PC-3 (cell line): ENCODE measurements at regions of chr20 and their contacts with region 1.

Region 1: GRCh38 chr20:4949833-4950178 is 51.5 kb downstream of the SLC23A2 start:
- DNase-seq: peak; percentile 60
- ATAC-seq: peak; percentile 61
- H3K4me3 ChIP-seq: no peak overlapping the region
- H3K27ac ChIP-seq: no peak overlapping the region
- H3K4me1 ChIP-seq: peaks cover 5% of the 10 kb centered on the region
- H3K27me3 ChIP-seq: no peaks in the 10 kb centered on the region
- CTCF ChIP-seq: peak; percentile 86

Region 2: DNA sequence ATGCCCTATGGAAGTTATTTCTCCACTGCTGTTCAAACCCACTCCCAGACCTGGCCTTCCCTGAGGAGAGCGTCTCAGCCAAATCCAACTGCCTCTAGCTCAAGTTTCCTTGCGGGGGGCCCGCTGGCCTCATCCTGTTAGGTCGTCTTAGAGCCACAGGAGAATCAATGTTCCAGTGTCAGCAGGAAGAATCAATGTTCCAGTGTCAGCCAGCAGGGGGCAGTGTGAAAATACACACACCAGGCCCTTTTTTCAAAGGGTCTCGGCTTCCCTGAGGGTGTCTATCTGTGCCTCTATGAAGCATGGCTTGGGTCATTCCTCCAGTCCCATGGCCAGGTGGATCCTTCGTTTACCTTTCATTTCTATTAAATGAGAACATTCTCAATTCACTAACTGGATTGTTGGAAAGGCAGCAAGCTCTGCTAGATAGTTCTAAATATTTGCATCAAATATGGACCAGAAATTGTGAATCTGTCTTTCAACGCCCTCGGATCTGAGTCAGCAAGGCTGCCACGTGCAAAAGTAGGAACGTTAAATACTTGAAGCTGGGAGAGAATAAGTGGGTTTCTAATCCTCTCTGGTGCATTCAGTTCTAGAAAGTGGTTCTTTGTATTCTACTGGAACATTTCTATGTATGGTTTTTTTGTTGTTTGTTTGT is 208.9 kb before region 1 on chr20:
- CTCF ChIA-PET with region 1: no interaction called
- POLR2A ChIA-PET with region 1: no interaction called
- intact Hi-C with region 1: loop called (anchors 5 kb)
- DNase-seq: peak; percentile 68
- ATAC-seq: peak; percentile 33; the same call in 1 of the 2 replicates
- H3K4me3 ChIP-seq: no peak overlapping the region
- H3K27ac ChIP-seq: no peak overlapping the region
- H3K4me1 ChIP-seq: no peaks in the 10 kb centered on the region
- H3K27me3 ChIP-seq: no peaks in the 10 kb centered on the region
- CTCF ChIP-seq: peak; percentile 95

Region 3: GRCh38 chr20:4779616-4780015 is 170.2 kb before region 1 on chr20:
- CTCF ChIA-PET with region 1: interaction called, 12 read pairs
- POLR2A ChIA-PET with region 1: no interaction called
- intact Hi-C with region 1: no loop called
- DNase-seq: no peak
- ATAC-seq: no peak
- H3K4me3 ChIP-seq: no peak overlapping the region
- H3K27ac ChIP-seq: no peak overlapping the region
- H3K4me1 ChIP-seq: no peaks in the 10 kb centered on the region
- H3K27me3 ChIP-seq: no peaks in the 10 kb centered on the region
- CTCF ChIP-seq: no peak

Region 4: GRCh38 chr20:4869290-4870193 is 80.3 kb before region 1 on chr20:
- CTCF ChIA-PET with region 1: no interaction called
- POLR2A ChIA-PET with region 1: interaction called, 3 read pairs
- intact Hi-C with region 1: loop called (anchors 1 kb)
- DNase-seq: peak; percentile 92
- ATAC-seq: peak; percentile 97
- H3K4me3 ChIP-seq: peak overlapping the region; percentile 56
- H3K27ac ChIP-seq: peak overlapping the region; percentile 82
- H3K4me1 ChIP-seq: peaks cover 25% of the 10 kb centered on the region
- H3K27me3 ChIP-seq: no peaks in the 10 kb centered on the region
- CTCF ChIP-seq: no peak